CD4-positive, alpha-beta T cell (primary cell): ENCODE measurements at regions of chr3 and their contacts with region 1.

Region 1: GRCh38 chr3:150787741-150788370 is 24.9 kb upstream of the SIAH2 start:
- DNase-seq: peak; percentile 63 to 85 (median 72)
- ATAC-seq: peak; percentile 86
- H3K4me3 ChIP-seq: no peak overlapping the region
- H3K4me3 Mint-ChIP-seq: no peak overlapping the region
- H3K27ac ChIP-seq: no peak overlapping the region
- H3K27ac Mint-ChIP-seq: no peak overlapping the region
- H3K4me1 ChIP-seq: peaks cover 3% of the 10 kb centered on the region
- H3K4me1 Mint-ChIP-seq: no peaks in the 10 kb centered on the region
- H3K27me3 ChIP-seq: no peaks in the 10 kb centered on the region
- H3K27me3 Mint-ChIP-seq: peaks cover 7% of the 10 kb centered on the region
- CTCF ChIP-seq: peak; percentile 98

Region 2: GRCh38 chr3:150798122-150798626 is 10.3 kb after region 1 on chr3:
- CTCF ChIA-PET with region 1: no interaction called
- POLR2A ChIA-PET with region 1: no interaction called
- intact Hi-C with region 1: no loop called
- DNase-seq: no peak
- ATAC-seq: no peak
- H3K4me3 ChIP-seq: no peak overlapping the region
- H3K4me3 Mint-ChIP-seq: no peak overlapping the region
- H3K27ac ChIP-seq: no peak overlapping the region
- H3K27ac Mint-ChIP-seq: no peak overlapping the region
- H3K4me1 ChIP-seq: no peaks in the 10 kb centered on the region
- H3K4me1 Mint-ChIP-seq: no peaks in the 10 kb centered on the region
- H3K27me3 ChIP-seq: no peaks in the 10 kb centered on the region
- H3K27me3 Mint-ChIP-seq: peaks cover 12% of the 10 kb centered on the region
- CTCF ChIP-seq: no peak

Region 3: DNA sequence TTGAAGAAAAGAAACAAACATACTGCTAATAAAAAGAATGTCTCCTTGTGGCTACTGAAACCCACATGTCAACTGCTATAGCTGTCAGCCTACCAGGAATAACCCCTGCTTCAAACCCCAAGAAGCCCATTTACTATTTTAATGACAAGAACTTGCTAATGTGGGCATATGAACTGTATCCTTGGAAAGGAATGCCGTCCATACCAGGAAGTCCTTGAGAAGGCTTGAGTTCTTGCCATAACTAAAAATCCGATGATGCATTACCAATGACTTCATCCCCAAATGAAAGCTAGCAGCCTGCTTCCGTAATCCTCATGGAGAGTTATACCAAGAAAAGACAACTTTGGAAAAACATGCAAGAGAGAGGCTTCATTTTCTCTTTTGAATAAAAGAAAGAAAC is 82.5 kb after region 1 on chr3:
- CTCF ChIA-PET with region 1: no interaction called
- POLR2A ChIA-PET with region 1: no interaction called
- intact Hi-C with region 1: loop called (anchors 1 to 2 kb)
- DNase-seq: no peak
- ATAC-seq: no peak
- H3K4me3 ChIP-seq: no peak overlapping the region
- H3K4me3 Mint-ChIP-seq: no peak overlapping the region
- H3K27ac ChIP-seq: no peak overlapping the region
- H3K27ac Mint-ChIP-seq: no peak overlapping the region
- H3K4me1 ChIP-seq: no peaks in the 10 kb centered on the region
- H3K4me1 Mint-ChIP-seq: peaks cover 2% of the 10 kb centered on the region
- H3K27me3 ChIP-seq: no peaks in the 10 kb centered on the region
- H3K27me3 Mint-ChIP-seq: peaks cover 14% of the 10 kb centered on the region
- CTCF ChIP-seq: no peak